ENCODE measurements at regions of chr20 and their contacts with region 1.

Region 1: DNA sequence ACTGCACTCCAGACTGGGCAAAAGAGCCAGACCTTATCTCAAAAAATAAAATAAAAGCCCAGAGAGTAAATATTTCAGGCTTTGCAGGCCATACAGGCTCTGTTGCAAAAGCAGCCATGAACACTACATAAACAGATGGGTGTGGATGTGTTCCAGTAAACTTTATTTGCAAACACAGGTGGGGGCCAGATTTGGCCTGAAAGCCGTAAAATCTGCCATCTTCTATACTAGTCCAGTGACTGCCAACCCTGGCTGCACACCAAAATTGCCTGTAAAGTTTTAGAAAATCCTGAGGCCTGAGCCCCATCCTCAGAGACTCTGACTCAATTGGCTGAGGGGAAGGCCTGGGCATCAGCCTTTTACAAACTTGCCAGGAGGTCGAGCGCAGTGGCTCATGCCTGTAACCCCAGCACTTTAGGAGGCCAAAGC is 103.6 kb downstream of the ZMYND8 start:
- DNase-seq: no peak

Region 2: GRCh38 chr20:46145713-46146112 is 1107.2 kb before region 1 on chr20:
- intact Hi-C with region 1: loop called in 1 of 2 experiments (anchors 5 kb)
- DNase-seq: no peak